ENCODE measurements at regions of chr14 and their contacts with region 1.

Region 1: GRCh38 chr14:31678421-31679249 is 117.4 kb downstream of the NUBPL start:
- DNase-seq: no peak
- ATAC-seq: no peak
- H3K4me3 ChIP-seq: no peak overlapping the region
- H3K27ac ChIP-seq: no peak overlapping the region
- H3K4me1 ChIP-seq: no peaks in the 10 kb centered on the region
- H3K27me3 ChIP-seq: no peaks in the 10 kb centered on the region
- CTCF ChIP-seq: no peak

Region 2: GRCh38 chr14:31180299-31181051 is 498.2 kb before region 1 on chr14:
- CTCF ChIA-PET with region 1: no interaction called
- POLR2A ChIA-PET with region 1: no interaction called
- intact Hi-C with region 1: no loop called
- DNase-seq: peak; percentile 44
- ATAC-seq: peak; percentile 91
- H3K4me3 ChIP-seq: no peak overlapping the region
- H3K27ac ChIP-seq: 0 out of 2 replicates have a peak overlapping the region, but pooled peaks have one; percentile 7
- H3K4me1 ChIP-seq: peaks cover 8% of the 10 kb centered on the region
- H3K27me3 ChIP-seq: no peaks in the 10 kb centered on the region
- CTCF ChIP-seq: no peak

Region 3: DNA sequence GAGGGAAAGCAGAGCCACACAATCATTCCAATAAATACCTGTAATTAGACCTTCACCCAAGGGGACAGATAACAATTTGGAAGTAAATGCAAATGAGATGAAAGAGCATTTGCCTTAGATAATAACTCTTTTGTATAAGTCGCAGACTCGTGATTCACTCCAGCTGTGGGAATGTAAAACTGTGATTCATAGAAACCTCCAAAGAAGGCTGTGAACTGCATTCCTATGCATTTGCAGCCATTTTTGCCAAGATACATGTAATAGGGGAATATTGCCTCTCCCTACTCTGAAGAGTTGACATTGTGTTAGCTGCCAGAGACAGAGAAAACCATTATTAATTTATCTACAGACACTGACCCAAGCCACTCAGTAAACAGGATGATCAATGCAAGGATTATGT is 216.6 kb after region 1 on chr14:
- CTCF ChIA-PET with region 1: no interaction called
- POLR2A ChIA-PET with region 1: no interaction called
- intact Hi-C with region 1: loop called (anchors 10 kb)
- DNase-seq: peak; percentile 84
- ATAC-seq: peak; percentile 61
- H3K4me3 ChIP-seq: no peak overlapping the region
- H3K27ac ChIP-seq: peak overlapping the region; percentile 59
- H3K4me1 ChIP-seq: peaks cover 36% of the 10 kb centered on the region
- H3K27me3 ChIP-seq: no peaks in the 10 kb centered on the region
- CTCF ChIP-seq: no peak

Measured in PC-3 (cell line).